Activated CD4-positive, alpha-beta memory T cell treated with anti-CD3 and anti-CD28 coated beads for 36 hours (primary cell): ENCODE measurements at regions of chr4 and their contacts with region 1.

Region 1: DNA sequence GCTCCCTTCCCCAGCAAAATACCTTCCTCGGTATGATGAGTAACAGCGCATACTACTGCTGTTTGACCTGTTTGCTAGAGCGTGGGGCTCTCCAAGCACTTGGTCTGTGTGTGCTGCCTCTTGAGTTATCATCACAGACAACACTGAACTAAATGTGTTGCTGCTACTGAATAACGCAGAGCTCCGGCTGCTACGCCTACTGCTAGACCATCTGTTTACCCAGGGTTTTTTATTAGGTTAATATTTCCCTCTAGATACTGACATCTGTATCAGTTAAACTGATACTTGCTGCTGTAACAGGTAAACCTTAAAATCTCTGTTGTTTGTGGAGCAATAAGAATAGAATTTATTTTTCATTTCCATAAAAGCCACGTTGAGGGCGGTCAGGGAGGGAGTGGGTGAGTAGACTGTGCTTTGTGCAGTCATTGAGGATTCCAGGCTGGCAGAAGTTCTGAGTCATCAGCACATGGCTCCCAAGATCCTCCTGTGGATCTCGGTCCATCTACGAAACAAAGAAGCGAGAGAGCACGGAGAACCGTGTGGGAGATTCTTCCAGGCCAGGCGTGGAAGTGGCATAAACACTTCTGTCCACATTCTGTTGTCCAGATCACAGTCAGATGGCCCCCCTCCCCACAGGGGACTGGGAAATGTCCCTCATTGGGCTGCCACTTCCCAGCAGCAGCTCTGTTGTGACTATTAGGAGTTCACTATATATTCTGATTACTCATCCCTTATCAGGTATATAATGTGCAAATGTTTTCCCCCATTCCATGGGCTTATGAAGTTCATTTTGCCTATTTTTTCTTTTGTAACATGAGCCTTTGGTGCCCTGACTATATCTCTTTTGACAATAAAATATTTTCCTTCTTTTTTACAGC is 14.1 kb downstream of the GRK4 start:
- DNase-seq: no peak
- H3K4me3 Mint-ChIP-seq: no peak overlapping the region
- H3K27ac Mint-ChIP-seq: no peak overlapping the region
- H3K4me1 Mint-ChIP-seq: no peaks in the 10 kb centered on the region
- H3K27me3 Mint-ChIP-seq: no peaks in the 10 kb centered on the region

Region 2: DNA sequence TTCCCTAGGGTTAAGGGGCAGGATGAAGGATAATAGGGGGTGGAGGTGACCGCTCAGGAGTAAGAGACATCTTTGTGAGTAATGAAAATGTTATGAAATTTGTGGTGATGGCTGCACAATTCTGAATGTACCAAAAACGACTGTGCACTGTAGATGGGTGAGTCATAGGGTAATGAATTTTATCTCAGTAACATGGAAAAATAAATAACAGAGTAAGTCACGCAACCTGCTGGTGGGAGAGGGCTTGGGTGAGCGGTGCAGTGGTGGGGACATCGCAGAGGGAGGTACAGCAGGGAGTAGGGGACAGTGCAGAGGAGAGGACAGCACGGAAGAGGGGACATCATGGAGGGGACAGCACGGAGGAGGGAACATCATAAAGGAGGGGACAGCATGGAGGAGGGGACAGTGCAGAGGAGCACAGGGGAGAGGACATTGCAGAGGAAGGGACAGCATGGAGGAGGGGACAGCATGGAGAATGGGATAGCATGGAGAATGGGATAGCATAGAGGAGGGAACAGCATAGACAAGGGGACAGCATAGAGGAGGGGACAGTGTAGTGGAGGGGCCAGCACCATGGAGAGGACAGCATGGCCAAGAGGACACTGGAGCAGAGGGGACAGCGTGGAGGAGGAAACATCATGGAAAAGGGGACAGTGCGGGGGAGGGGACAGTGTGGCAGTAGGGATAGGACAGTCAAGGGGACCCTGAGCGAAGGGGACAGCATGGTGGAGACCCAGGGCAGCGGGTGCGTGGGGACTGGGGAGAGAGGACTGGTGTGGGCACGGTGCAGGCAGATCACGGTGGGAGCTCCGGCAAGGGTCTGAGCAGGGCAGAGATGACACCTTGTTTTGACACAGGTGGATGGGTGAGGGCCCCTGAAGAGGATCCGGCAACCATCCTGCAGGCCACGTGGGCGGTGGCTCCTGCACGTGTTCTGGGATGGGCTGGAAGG is 647.1 kb before region 1 on chr4:
- CTCF ChIA-PET with region 1: no interaction called
- POLR2A ChIA-PET with region 1: no interaction called
- intact Hi-C with region 1: no loop called
- DNase-seq: no peak
- H3K4me3 Mint-ChIP-seq: no peak overlapping the region
- H3K27ac Mint-ChIP-seq: no peak overlapping the region
- H3K4me1 Mint-ChIP-seq: no peaks in the 10 kb centered on the region
- H3K27me3 Mint-ChIP-seq: no peaks in the 10 kb centered on the region

Region 3: DNA sequence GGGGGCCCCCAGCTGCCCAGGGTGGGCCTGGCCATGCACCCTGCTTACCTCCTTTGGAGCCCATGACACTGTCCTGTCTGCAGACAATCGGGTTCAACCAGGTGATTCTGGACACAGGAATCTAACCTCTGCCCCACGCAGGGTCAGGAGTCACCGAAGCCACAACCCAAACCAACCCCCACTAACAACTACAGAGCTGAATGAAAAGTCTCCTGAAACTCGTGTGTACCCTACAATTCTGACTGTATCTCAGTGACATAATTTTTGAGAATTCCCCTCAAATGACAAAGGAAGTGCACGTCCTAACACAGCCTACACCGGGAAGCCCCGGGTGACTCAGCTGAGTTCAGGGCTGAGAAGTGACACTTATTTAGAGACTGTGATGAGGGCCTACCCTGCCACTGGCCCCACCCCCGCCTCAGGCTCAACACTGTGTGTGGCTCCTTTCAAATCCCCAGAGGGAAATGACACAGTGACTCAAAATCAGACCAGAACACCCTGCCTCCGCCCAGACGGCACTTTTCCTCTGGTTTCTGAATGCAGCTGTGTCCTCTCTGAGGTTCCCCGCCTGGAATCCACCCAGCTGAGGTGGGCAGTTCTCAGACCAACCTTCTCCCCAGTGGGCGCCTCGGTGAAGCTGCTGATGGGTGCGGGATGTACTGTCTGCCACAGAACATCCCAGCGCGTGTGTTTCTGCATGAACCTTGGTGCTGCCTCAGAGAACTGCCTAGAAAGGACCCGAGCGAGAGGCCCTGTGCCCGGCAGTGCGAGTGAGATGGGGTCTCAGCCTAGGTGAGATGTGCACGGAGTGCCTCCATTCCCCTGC is 231.3 kb before region 1 on chr4:
- CTCF ChIA-PET with region 1: no interaction called
- POLR2A ChIA-PET with region 1: no interaction called
- intact Hi-C with region 1: no loop called
- DNase-seq: peak; percentile 98
- H3K4me3 Mint-ChIP-seq: peak overlapping the region; percentile 54
- H3K27ac Mint-ChIP-seq: peak overlapping the region; percentile 90
- H3K4me1 Mint-ChIP-seq: peaks cover 61% of the 10 kb centered on the region
- H3K27me3 Mint-ChIP-seq: no peaks in the 10 kb centered on the region

Region 4: GRCh38 chr4:2995546-2996265 is 18.3 kb after region 1 on chr4:
- CTCF ChIA-PET with region 1: interaction called, 10 read pairs
- POLR2A ChIA-PET with region 1: no interaction called
- intact Hi-C with region 1: no loop called
- DNase-seq: no peak
- H3K4me3 Mint-ChIP-seq: no peak overlapping the region
- H3K27ac Mint-ChIP-seq: no peak overlapping the region
- H3K4me1 Mint-ChIP-seq: no peaks in the 10 kb centered on the region
- H3K27me3 Mint-ChIP-seq: peaks cover 3% of the 10 kb centered on the region

Region 5: GRCh38 chr4:3041192-3042142 is 64.0 kb after region 1 on chr4:
- CTCF ChIA-PET with region 1: interaction called, 98 read pairs
- POLR2A ChIA-PET with region 1: no interaction called
- intact Hi-C with region 1: loop called (anchors 1 kb)
- DNase-seq: peak; percentile 62
- H3K4me3 Mint-ChIP-seq: peak overlapping the region; percentile 78
- H3K27ac Mint-ChIP-seq: no peak overlapping the region
- H3K4me1 Mint-ChIP-seq: peaks cover 60% of the 10 kb centered on the region
- H3K27me3 Mint-ChIP-seq: peaks cover 12% of the 10 kb centered on the region